Mucosa of descending colon (tissue), 3 donors: ENCODE measurements at regions of chr11 and their contacts with region 1.

Region 1: DNA sequence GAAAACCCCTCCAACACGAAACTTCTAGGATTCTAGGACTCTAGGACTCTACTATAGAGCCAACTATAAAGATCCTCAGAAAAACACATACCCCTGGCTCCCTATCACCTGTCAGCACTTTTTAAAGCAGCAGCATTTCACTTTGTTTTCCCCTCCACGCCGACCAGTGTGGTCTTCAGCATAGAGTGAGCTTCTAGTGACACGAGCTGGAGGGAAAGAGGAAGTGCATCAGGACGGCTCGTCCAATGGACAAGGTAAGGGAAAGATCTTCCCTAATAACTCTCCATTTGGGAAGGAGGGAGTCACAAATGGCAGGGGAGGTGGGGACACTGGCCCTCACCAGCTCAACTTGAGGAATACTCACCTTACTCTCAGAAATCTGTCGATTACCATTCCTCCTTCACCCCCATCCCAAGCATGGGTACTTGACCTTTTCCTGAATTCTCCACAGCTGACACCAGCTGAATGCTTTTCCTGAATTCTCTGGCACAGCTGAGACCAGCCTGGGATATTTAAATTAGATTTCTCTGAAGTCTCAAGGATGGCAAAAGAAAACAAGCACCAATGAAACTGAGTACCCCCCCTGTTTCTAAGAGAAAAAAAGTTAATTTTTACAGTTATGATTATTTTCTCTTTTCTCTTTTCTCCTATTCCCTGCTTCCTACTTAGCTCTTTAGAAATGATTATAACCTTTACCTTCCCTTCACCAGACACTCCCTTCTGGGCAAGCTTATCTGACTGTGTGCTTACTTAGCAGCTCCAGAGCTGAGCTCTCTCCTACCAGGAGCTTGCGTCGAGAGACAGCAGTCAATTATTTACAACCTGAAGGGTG is 33.3 kb upstream of the NNMT start:
- DNase-seq: peak in 1 of 3 donors; percentile 46
- ATAC-seq: peak; percentile 43
- H3K4me3 ChIP-seq: no peak overlapping the region
- H3K4me1 ChIP-seq: no peaks in the 10 kb centered on the region
- CTCF ChIP-seq: no peak

Region 2: GRCh38 chr11:113896156-113896879 is 366.6 kb before region 1 on chr11:
- intact Hi-C with region 1: loop called in 1 of 2 experiments (anchors 5 kb)
- DNase-seq: peak in 2 of 3 donors; percentile 33 to 78
- ATAC-seq: peak; percentile 74
- H3K4me3 ChIP-seq: no peak overlapping the region
- H3K4me1 ChIP-seq: peaks cover 3% of the 10 kb centered on the region
- CTCF ChIP-seq: peak; percentile 81

Region 3: DNA sequence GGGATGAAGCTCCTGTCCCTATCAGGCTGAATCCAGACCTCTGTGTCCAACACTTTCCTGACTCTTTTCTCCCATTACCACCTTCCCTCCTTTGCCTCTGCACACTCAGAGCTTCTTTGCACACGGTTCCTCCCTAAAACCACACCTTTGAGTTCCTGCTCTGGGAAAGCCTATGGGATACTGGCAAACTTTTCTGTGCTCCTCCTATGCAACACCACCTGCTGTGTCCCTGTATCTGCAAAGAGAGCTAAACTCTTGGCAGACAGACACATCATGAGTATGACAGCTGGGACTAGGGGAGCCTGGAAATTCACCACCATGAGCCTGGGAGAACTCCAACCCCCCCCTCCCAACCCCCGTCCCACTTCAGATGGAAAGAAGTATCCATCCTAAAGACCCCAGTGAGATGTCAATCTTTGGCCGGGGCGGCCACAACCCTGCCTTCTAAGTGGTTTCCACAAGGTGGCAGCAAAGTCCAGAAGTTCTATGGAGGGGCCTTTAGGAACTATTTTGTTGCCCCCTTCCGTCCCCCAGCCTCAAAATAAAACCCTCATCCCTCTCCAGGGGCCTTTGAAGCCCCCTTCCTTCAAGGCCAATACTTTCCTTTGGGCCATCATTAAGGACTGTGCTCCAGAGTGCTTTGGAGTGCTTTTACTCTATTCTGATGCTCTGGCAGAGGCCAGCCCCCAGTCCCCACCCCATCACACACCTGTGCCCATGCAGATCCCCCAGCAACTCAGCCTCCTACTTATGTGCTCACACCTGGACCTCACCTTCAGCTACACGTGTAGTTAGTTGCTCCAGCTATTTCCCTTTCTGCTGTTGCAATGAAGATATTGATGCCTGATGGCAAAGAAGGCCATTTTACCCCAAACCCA is 268.6 kb before region 1 on chr11:
- intact Hi-C with region 1: loop called in 1 of 2 experiments (anchors 10 kb)
- DNase-seq: peak in 2 of 3 donors; percentile 35 to 41
- ATAC-seq: peak; percentile 47
- H3K4me3 ChIP-seq: no peak overlapping the region
- H3K4me1 ChIP-seq: no peaks in the 10 kb centered on the region
- CTCF ChIP-seq: peak; percentile 44

Region 4: GRCh38 chr11:114036156-114036811 is 226.6 kb before region 1 on chr11:
- intact Hi-C with region 1: loop called (anchors 5 kb)
- DNase-seq: peak; percentile 82 to 89 (median 86)
- ATAC-seq: peak; percentile 89
- H3K4me3 ChIP-seq: no peak overlapping the region
- H3K4me1 ChIP-seq: peaks cover 16% of the 10 kb centered on the region
- CTCF ChIP-seq: peak; percentile 80

Region 5: GRCh38 chr11:114208377-114208776 is 54.5 kb before region 1 on chr11:
- intact Hi-C with region 1: no loop called
- DNase-seq: no peak
- ATAC-seq: peak; percentile 62
- H3K4me3 ChIP-seq: no peak overlapping the region
- H3K4me1 ChIP-seq: no peaks in the 10 kb centered on the region
- CTCF ChIP-seq: no peak